ENCODE measurements at regions of chr11 and their contacts with region 1.

Region 1: DNA sequence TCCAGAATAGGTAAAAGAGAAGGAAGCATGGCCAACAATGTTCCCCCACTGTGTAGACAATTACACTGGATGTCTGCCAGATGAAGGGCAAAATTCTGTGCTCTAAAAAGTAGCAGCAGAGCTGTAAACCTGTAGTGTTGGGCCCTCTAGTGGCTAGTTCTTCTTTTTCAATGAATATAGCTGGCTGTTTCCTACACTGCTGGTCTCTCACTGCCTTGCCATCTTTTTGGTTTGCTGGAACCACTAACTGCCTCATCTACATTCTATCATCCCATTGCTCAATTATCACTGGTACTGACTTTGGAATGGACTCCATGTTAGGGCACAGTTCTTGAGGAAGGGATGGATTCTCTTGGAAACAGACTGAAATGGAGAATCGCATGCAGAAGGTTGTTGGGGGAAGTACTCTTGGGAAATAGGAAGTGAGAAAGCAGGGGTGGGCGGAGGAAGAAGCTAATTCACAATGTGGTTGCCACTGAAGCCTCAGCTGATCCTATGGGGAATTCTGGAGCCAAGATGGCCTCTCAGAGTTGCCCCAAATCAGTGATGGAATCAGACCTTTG is 17.9 kb downstream of the KCNE3 start:
- DNase-seq: peak; percentile 55 to 72 (median 65)
- H3K4me3 ChIP-seq: no peak overlapping the region
- H3K4me3 Mint-ChIP-seq: no peak overlapping the region
- H3K27ac ChIP-seq: no peak overlapping the region
- H3K27ac Mint-ChIP-seq: no peak overlapping the region
- H3K4me1 ChIP-seq: no peaks in the 10 kb centered on the region
- H3K4me1 Mint-ChIP-seq: peaks cover 0 to 4% (median 2%) of the 10 kb centered on the region in 4 donors
- H3K27me3 ChIP-seq: no peaks in the 10 kb centered on the region
- H3K27me3 Mint-ChIP-seq: peaks cover 6 to 18% of the 10 kb centered on the region in 2 donors

Region 2: GRCh38 chr11:73797457-73797856 is 652.0 kb before region 1 on chr11:
- CTCF ChIA-PET with region 1: no interaction called
- POLR2A ChIA-PET with region 1: no interaction called
- intact Hi-C with region 1: no loop called
- DNase-seq: no peak
- H3K4me3 ChIP-seq: no peak overlapping the region
- H3K4me3 Mint-ChIP-seq: no peak overlapping the region
- H3K27ac ChIP-seq: no peak overlapping the region
- H3K27ac Mint-ChIP-seq: no peak overlapping the region
- H3K4me1 ChIP-seq: no peaks in the 10 kb centered on the region
- H3K4me1 Mint-ChIP-seq: peaks cover 0 to 12% (median 2%) of the 10 kb centered on the region in 4 donors
- H3K27me3 ChIP-seq: no peaks in the 10 kb centered on the region
- H3K27me3 Mint-ChIP-seq: no peaks in the 10 kb centered on the region

Region 3: GRCh38 chr11:74255741-74256369 is 193.6 kb before region 1 on chr11:
- CTCF ChIA-PET with region 1: interaction called, 89 read pairs
- POLR2A ChIA-PET with region 1: interaction called, 3 read pairs
- intact Hi-C with region 1: loop called (anchors 1 kb)
- DNase-seq: peak; percentile 39 to 62 (median 52)
- H3K4me3 ChIP-seq: no peak overlapping the region
- H3K4me3 Mint-ChIP-seq: no peak overlapping the region
- H3K27ac ChIP-seq: no peak overlapping the region
- H3K27ac Mint-ChIP-seq: peak overlapping the region in 2 of 7 donors; percentile 15 to 23
- H3K4me1 ChIP-seq: no peaks in the 10 kb centered on the region
- H3K4me1 Mint-ChIP-seq: peaks cover 0 to 7% (median 4%) of the 10 kb centered on the region in 4 donors
- H3K27me3 ChIP-seq: no peaks in the 10 kb centered on the region
- H3K27me3 Mint-ChIP-seq: no peaks in the 10 kb centered on the region

Region 4: GRCh38 chr11:74299015-74299414 is 150.4 kb before region 1 on chr11:
- CTCF ChIA-PET with region 1: no interaction called
- POLR2A ChIA-PET with region 1: no interaction called
- intact Hi-C with region 1: no loop called
- DNase-seq: no peak
- H3K4me3 ChIP-seq: no peak overlapping the region
- H3K4me3 Mint-ChIP-seq: no peak overlapping the region
- H3K27ac ChIP-seq: no peak overlapping the region
- H3K27ac Mint-ChIP-seq: no peak overlapping the region
- H3K4me1 ChIP-seq: no peaks in the 10 kb centered on the region
- H3K4me1 Mint-ChIP-seq: peaks cover 5 to 9% (median 6%) of the 10 kb centered on the region in 4 donors
- H3K27me3 ChIP-seq: no peaks in the 10 kb centered on the region
- H3K27me3 Mint-ChIP-seq: peaks cover 6 to 11% of the 10 kb centered on the region in 2 donors

Region 5: DNA sequence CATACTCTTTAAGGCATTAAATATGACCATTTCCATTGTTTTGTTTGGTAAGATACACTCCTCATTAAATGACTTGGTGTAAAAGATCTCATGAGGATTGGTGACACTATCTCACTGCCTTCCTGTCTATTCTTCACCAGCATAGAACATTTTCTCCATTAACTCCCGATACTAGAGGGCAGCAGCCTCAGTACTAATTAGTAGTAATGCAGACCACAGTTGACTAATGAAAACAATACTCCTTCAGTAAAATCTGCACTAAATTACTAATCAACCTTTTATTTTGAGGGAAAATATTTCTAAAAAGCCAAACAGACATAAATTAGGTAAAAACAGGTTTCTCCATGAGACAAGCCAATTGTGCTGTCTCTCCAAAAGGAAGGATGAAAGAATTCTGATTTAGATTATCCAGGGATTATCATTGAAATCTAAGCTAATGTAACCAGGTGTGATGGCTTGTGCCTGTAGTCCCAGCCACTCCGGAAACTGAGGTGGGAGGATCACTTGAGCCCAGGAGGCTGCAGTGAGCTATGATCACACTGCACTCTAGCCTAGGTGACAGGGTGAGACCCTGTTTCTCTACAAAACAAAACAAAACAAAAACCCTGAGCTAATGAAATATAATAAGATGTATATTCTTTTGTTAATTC is 60.6 kb before region 1 on chr11:
- CTCF ChIA-PET with region 1: interaction called, 339 read pairs
- POLR2A ChIA-PET with region 1: interaction called, 9 read pairs
- intact Hi-C with region 1: loop called (anchors 1 kb)
- DNase-seq: peak; percentile 63 to 77 (median 70)
- H3K4me3 ChIP-seq: no peak overlapping the region
- H3K4me3 Mint-ChIP-seq: peak overlapping the region in 4 of 8 donors; percentile 17 to 53 (median 46)
- H3K27ac ChIP-seq: no peak overlapping the region
- H3K27ac Mint-ChIP-seq: peak overlapping the region in 6 of 7 donors; percentile 43 to 86 (median 68)
- H3K4me1 ChIP-seq: peaks cover 19% of the 10 kb centered on the region
- H3K4me1 Mint-ChIP-seq: peaks cover 23 to 32% (median 25%) of the 10 kb centered on the region in 4 donors
- H3K27me3 ChIP-seq: no peaks in the 10 kb centered on the region
- H3K27me3 Mint-ChIP-seq: no peaks in the 10 kb centered on the region

Region 6: GRCh38 chr11:74434528-74434927 is 14.9 kb before region 1 on chr11:
- CTCF ChIA-PET with region 1: interaction called, 30 read pairs
- POLR2A ChIA-PET with region 1: no interaction called
- intact Hi-C with region 1: no loop called
- DNase-seq: no peak
- H3K4me3 ChIP-seq: no peak overlapping the region
- H3K4me3 Mint-ChIP-seq: no peak overlapping the region
- H3K27ac ChIP-seq: no peak overlapping the region
- H3K27ac Mint-ChIP-seq: no peak overlapping the region
- H3K4me1 ChIP-seq: no peaks in the 10 kb centered on the region
- H3K4me1 Mint-ChIP-seq: no peaks in the 10 kb centered on the region
- H3K27me3 ChIP-seq: no peaks in the 10 kb centered on the region
- H3K27me3 Mint-ChIP-seq: peaks cover 2 to 4% of the 10 kb centered on the region in 2 donors

Region 7: DNA sequence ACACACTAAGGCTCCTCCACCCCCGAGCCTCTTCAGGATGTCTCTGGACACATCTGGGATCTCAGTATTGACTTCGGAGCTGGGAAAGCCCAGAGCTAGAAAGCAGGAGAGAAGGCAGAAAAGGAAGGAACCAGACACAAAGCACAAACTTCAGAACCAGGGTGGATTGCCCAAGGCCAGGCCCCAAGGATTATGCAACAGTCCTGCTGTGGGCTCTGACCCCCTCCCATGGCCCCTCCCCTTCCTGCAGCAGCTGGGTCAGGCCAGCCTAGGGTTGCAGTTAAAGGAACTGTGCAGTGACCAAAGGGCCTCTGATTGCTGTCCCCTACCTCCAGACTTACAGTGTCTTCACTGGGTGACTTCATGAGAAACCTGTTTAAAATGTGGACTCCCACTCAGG is 12.6 kb after region 1 on chr11:
- CTCF ChIA-PET with region 1: interaction called, 54 read pairs
- POLR2A ChIA-PET with region 1: no interaction called
- intact Hi-C with region 1: no loop called
- DNase-seq: no peak
- H3K4me3 ChIP-seq: no peak overlapping the region
- H3K4me3 Mint-ChIP-seq: no peak overlapping the region
- H3K27ac ChIP-seq: no peak overlapping the region
- H3K27ac Mint-ChIP-seq: no peak overlapping the region
- H3K4me1 ChIP-seq: no peaks in the 10 kb centered on the region
- H3K4me1 Mint-ChIP-seq: peaks cover 0 to 8% (median 0%) of the 10 kb centered on the region in 4 donors
- H3K27me3 ChIP-seq: no peaks in the 10 kb centered on the region
- H3K27me3 Mint-ChIP-seq: peaks cover 21 to 23% of the 10 kb centered on the region in 2 donors

Region 8: DNA sequence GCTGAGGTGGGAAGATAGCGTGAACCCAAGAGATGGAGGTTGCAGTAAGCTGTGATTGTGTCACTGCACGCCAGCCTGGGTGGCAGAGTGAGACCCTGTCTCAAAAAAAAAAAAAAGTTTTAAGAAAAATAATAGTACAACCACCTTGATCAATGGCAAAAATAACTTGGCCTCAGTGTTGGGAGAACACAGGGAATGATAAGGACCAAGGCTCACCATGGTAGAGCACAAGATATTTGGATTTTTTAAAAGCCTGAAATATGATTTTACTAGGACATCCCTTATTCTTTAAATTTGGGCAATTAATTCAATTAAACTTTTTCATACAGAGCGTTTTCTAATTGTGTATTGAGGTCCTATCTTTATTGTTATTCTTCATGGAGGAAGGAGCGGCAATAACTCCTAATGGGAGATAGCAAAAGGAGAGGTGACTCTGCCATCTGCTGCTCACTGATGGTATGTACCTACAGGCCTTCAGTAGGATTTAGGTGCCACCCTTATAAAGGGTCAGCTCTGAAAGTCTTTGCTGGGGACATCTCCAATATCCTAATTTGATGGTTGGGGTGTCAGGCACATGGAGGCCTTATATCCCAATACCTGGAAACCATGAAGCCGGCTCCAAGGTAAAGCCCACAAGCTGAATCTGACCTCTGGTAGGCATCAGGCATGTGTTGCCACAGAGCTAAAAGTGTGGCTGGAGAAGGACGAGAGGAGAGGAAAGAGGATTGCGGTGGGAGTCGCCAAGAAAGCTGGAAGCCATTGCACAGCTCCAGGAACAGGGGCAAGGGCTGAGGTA is 121.0 kb after region 1 on chr11:
- CTCF ChIA-PET with region 1: interaction called, 111 read pairs
- POLR2A ChIA-PET with region 1: interaction called, 4 read pairs
- intact Hi-C with region 1: loop called (anchors 1 kb)
- DNase-seq: peak in 2 of 5 donors; percentile 7 to 9
- H3K4me3 ChIP-seq: no peak overlapping the region
- H3K4me3 Mint-ChIP-seq: no peak overlapping the region
- H3K27ac ChIP-seq: no peak overlapping the region
- H3K27ac Mint-ChIP-seq: peak overlapping the region in 2 of 7 donors; percentile 14 to 48
- H3K4me1 ChIP-seq: no peaks in the 10 kb centered on the region
- H3K4me1 Mint-ChIP-seq: no peaks in the 10 kb centered on the region
- H3K27me3 ChIP-seq: no peaks in the 10 kb centered on the region
- H3K27me3 Mint-ChIP-seq: peaks cover 3 to 4% of the 10 kb centered on the region in 2 donors

Region 9: GRCh38 chr11:74726547-74727182 is 277.2 kb after region 1 on chr11:
- CTCF ChIA-PET with region 1: interaction called, 3 read pairs
- POLR2A ChIA-PET with region 1: no interaction called
- intact Hi-C with region 1: loop called (anchors 5 kb)
- DNase-seq: peak; percentile 37 to 54 (median 52)
- H3K4me3 ChIP-seq: no peak overlapping the region
- H3K4me3 Mint-ChIP-seq: no peak overlapping the region
- H3K27ac ChIP-seq: no peak overlapping the region
- H3K27ac Mint-ChIP-seq: no peak overlapping the region
- H3K4me1 ChIP-seq: peaks cover 7% of the 10 kb centered on the region
- H3K4me1 Mint-ChIP-seq: peaks cover 3 to 12% (median 8%) of the 10 kb centered on the region in 4 donors
- H3K27me3 ChIP-seq: no peaks in the 10 kb centered on the region
- H3K27me3 Mint-ChIP-seq: peaks cover 14 to 23% of the 10 kb centered on the region in 2 donors